ENCODE measurements at regions of chr5 and their contacts with region 1.

Region 1: DNA sequence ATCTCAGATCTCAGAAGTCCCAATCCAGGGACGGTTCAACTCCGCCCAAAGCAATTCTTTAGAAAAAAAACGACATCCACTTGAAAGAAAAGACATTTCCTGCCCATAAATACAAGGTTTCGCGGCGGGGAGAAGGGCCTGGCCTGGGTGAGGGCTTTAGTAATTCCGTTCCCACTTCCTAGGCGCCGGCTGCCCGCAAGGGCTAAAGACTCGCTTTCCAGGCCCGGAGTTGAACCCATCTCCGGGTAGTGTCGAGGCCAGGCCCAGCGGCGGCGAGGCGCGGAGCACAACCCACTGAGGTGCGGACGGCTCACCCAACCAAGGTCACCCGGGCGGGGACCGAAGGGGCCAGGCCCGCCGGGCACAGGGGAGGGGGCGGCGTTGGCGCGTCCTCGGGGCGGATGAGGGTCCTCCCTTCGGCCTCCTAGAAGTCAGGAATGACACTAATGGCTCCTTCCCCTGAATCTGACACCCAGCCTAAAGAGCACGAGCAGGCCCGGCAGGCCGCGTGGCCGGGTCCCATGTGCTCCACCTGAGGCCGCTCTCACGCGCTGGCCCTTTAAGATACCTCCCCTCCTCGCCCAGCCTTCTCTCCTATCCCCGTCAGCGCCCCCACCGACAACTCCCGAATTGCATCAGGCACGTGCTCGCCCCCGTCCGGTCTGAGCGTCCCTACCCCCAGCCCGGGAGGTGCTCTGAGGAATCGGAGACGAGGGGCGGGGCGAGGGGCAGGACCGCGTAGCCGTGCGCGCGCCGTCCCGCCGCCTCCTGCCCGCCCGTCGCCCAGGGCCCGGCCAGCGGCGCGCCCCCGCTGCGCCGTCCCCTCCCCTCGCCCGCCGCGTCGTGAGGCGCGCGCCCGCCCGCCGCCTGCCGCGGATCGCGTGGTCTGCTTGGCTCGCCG is 467 bp upstream of the LARP1 start:
- DNase-seq: peak; percentile 100

Region 2: DNA sequence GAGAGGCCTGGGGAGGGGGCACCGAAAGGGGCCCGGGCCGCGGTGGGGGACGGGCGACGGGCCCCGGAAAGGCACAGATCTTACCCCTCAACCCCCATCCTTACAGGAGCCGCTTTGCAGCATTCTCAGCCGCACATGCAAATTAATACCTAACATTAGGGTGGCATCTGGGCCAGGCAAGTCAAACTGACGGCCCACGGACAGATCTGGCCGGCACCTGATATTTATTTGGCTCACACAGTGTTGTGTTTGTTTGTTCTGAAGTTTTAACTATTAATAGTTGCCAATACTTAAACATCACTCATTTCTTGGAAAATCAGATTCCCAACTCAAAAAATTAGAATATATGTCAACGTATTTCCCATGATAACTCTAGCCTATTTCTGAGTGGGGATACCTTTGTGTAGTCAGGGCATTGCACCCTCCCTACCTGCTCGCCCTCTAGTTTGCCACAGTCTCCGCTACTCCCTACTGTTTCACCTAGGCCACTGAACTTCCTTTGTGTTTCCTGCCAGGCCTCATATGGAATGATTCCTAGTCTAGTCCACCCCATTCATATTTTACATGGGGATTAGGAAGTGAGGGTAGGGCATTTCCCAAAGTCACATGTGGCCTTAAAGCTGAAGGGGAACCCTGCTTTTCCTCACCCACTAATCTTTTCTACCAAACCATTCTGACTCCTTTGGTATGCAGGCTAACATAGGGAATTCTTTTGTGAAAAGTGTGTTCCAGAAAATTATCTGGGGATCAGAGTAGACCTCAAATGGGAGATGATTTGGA is 71.4 kb before region 1 on chr5:
- intact Hi-C with region 1: loop called in 1 of 2 experiments (anchors 10 kb)
- DNase-seq: no peak

Region 3: DNA sequence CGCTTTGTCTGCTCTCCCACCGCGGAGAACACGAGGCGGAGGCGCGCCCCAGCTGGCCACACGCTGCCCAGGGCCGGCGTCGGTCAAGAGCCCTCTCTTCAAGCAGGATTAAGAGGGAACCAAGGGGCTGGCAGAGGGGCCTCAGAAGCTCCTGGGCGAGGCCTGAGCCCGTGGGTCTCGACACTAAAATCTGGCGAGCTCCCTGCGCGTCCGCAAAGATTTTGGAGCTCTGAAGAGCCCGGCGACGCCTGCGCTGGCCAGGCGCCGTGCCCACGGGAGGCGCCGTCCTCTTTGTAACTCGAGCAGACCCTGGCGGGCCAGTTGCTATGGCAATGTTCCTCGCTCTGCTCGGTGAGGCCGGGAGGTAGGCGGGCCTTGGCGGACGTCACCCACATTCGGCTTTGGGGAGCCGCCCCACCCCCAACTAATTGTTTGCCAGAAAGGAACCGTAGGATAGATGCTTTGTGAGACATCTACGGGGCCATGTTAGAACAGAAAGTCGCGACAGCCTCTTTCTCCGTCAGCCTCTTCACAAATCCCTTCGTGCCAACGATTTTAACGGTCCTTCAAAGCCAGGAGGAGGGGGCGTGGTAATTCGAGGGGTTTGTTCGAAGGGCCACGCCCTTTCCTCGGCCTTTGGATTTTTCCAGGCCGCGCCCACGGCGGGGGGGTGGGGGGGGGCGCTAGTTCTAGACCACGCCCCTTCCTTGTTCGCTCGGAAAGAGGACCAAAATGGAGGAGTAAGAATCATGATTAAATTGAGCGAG is 103.0 kb after region 1 on chr5:
- intact Hi-C with region 1: loop called in 1 of 2 experiments (anchors 5 kb)
- DNase-seq: peak; percentile 99

Region 4: DNA sequence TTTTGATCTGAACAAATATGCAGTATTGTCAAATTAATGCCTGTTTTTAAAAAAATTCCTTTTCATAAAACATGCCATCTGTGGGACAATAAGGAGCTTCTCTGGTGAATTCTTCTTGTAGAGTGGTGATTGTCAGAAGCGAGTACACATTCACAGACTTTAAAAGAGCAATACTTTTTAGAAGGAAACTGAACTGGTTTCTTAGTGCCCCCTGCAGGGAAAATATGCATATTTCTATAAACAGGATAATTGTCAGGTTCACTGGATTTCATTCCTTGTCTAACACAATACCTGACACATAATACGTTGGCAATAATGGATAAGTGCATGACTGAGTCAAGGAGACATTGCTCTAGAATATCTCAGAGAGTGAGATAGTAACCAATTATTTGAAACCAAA is 392.5 kb after region 1 on chr5:
- intact Hi-C with region 1: no loop called
- DNase-seq: no peak